ENCODE measurements at regions of chr1 and their contacts with region 1.

Region 1: DNA sequence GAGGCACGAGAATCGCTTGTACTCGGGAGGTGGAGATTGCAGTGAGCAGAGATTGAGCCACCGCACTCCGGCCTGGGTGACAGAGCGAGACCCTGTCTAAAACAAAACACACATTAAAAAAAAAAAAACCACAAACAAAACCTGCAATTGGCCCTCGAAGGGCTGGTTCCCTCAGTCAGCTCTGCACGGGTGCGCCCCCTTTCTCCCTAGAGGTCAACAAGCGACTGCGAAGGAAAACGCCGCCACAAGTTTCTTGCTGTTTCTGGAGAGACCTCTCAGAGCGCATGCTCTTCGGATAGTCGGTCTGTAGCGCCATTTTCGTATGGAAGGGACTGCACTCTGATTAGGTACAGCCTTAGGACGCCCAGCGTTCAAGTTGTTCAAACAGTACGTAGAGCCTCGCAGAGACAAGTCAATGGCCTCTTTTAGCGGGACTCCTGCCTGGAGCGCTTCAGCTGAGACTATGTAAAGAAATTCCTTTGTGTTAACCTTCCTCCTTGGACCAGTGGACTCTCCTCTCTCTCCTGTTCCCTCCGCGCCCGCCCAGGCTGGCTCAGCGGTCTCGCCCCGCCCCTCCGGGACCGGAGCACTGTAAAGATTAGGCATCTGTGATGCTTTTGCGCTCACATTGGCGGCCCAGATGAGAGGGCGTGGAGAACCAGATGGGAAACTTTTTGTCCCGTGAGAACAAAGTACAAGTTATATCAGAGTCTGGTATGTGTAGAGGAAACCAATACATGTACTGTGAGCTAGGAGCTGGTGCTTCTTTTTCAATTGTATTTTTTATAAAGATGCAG is 1.0 kb upstream of the CDC14A start:
- DNase-seq: peak; percentile 72 to 95 (median 82)
- ATAC-seq: peak; percentile 74
- H3K4me3 ChIP-seq: peak overlapping the region; percentile 96
- H3K4me3 Mint-ChIP-seq: peak overlapping the region; percentile 93
- H3K27ac ChIP-seq: peak overlapping the region; percentile 86 to 92
- H3K27ac Mint-ChIP-seq: peak overlapping the region; percentile 96
- H3K4me1 ChIP-seq: peaks cover 21% of the 10 kb centered on the region
- H3K4me1 Mint-ChIP-seq: peaks cover 36% of the 10 kb centered on the region
- H3K27me3 ChIP-seq: no peaks in the 10 kb centered on the region
- H3K27me3 Mint-ChIP-seq: no peaks in the 10 kb centered on the region
- CTCF ChIP-seq: peak; percentile 26

Region 2: DNA sequence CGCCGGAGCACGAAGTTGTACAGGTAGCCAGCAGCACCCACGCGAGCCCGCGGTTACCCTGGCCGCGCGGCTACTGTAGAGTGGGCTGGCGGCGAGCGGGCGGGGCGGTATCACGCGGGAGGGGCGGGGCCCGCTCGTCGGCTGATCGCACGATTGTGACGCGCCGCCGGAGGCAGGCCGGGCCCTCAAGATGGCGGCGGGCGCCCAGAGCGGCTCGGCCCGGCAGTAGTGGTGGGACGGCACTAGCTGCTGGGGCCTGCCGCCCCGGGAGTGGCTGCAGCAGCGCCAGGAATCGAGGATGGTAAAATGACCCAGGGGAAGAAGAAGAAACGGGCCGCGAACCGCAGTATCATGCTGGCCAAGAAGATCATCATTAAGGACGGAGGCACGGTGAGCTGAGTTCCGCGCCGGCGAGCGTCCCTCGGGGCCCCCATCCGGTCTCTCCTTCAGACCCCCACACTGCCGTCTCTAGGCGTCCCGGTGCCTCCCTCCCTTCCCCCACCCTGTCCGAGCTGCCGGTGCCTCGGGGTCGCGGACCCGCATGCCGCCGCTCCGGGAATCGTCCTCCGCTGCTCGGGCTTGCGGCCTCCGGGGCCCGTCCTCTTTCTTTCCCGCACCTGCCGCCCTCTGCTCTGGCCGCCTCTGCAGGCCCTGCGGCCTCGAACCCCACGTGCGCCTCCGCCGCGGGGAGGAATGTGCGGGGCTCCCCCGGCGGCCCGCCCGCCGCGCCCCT is 313.2 kb before region 1 on chr1:
- CTCF ChIA-PET with region 1: no interaction called
- POLR2A ChIA-PET with region 1: interaction called, 4 read pairs
- intact Hi-C with region 1: loop called in 1 of 2 experiments (anchors 5 kb)
- DNase-seq: peak; percentile 76 to 96 (median 84)
- ATAC-seq: peak; percentile 78
- H3K4me3 ChIP-seq: peak overlapping the region; percentile 91
- H3K4me3 Mint-ChIP-seq: peak overlapping the region; percentile 98
- H3K27ac ChIP-seq: peak overlapping the region; percentile 94 to 98
- H3K27ac Mint-ChIP-seq: peak overlapping the region; percentile 98
- H3K4me1 ChIP-seq: peaks cover 28% of the 10 kb centered on the region
- H3K4me1 Mint-ChIP-seq: peaks cover 58% of the 10 kb centered on the region
- H3K27me3 ChIP-seq: no peaks in the 10 kb centered on the region
- H3K27me3 Mint-ChIP-seq: no peaks in the 10 kb centered on the region
- CTCF ChIP-seq: no peak

Region 3: DNA sequence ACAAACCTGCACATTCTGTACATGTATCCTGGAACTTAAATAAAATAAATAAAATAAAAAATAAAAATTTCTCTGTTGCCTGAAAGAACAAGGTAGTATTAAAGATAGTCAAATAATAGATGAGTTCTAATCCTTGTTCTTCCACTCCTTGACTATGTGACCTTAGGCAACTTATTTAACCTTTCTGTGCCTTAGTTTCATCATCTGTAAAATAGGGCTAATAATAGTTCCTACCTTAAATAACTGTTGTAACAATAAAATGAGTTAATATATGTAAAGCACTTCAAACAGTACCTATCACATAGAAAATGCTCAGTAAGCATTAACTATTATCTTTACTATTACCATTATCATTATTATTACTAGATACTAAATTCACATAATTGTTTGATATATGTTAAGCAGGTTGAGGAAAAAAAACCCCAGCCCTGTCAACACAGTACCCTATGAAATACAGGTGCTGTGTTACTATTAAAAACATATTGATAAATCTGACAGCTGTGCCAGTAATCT is 241.7 kb before region 1 on chr1:
- CTCF ChIA-PET with region 1: no interaction called
- POLR2A ChIA-PET with region 1: no interaction called
- intact Hi-C with region 1: no loop called
- DNase-seq: no peak
- ATAC-seq: no peak
- H3K4me3 ChIP-seq: no peak overlapping the region
- H3K4me3 Mint-ChIP-seq: no peak overlapping the region
- H3K27ac ChIP-seq: no peak overlapping the region
- H3K27ac Mint-ChIP-seq: no peak overlapping the region
- H3K4me1 ChIP-seq: no peaks in the 10 kb centered on the region
- H3K4me1 Mint-ChIP-seq: no peaks in the 10 kb centered on the region
- H3K27me3 ChIP-seq: no peaks in the 10 kb centered on the region
- H3K27me3 Mint-ChIP-seq: no peaks in the 10 kb centered on the region
- CTCF ChIP-seq: no peak

Region 4: GRCh38 chr1:100265931-100266740 is 85.2 kb before region 1 on chr1 and contains the start of gene RTCA:
- CTCF ChIA-PET with region 1: interaction called, 4 read pairs
- POLR2A ChIA-PET with region 1: interaction called, 35 read pairs
- intact Hi-C with region 1: loop called (anchors 5 kb)
- DNase-seq: peak; percentile 88 to 98 (median 94)
- ATAC-seq: peak; percentile 95
- H3K4me3 ChIP-seq: peak within 1 kb of the TSS; percentile 96
- H3K4me3 Mint-ChIP-seq: peak within 1 kb of the TSS; percentile 99
- H3K27ac ChIP-seq: peak within 1 kb of the TSS; percentile 62 to 67
- H3K27ac Mint-ChIP-seq: peak within 1 kb of the TSS; percentile 93
- H3K4me1 ChIP-seq: peaks cover 41% of the 10 kb centered on the region
- H3K4me1 Mint-ChIP-seq: peaks cover 60% of the 10 kb centered on the region
- H3K27me3 ChIP-seq: no peaks in the 10 kb centered on the region
- H3K27me3 Mint-ChIP-seq: no peaks in the 10 kb centered on the region
- CTCF ChIP-seq: no peak
- total RNA-seq, gene RTCA: 62.1 to 67.1 TPM

Region 5: DNA sequence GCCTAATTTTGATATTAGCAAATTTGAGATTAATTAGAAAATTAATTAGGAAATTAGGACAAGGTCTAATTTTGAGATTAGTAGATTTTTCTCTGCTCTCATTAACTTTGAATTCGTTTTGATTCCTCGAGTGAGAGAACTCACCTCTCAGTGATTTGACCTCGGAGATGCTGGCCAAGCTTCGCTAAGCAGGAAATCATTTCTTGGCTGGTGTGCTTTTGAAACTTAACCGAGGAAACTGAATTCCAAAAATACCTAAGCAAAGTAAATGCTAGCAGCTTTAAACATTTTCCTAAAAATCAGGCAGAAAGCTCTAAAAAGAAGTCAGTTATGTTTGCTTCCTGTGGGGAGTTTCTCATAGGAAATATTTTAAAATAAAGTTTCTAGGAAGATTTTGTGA is 35.9 kb after region 1 on chr1:
- CTCF ChIA-PET with region 1: interaction called, 13 read pairs
- POLR2A ChIA-PET with region 1: interaction called, 67 read pairs
- intact Hi-C with region 1: loop called (anchors 2 to 5 kb)
- DNase-seq: peak in 2 of 14 experiments; percentile 32
- ATAC-seq: no peak
- H3K4me3 ChIP-seq: peak overlapping the region; percentile 35
- H3K4me3 Mint-ChIP-seq: peak overlapping the region; percentile 74
- H3K27ac ChIP-seq: peak overlapping the region in 1 of 2 donors; percentile 78
- H3K27ac Mint-ChIP-seq: peak overlapping the region; percentile 83
- H3K4me1 ChIP-seq: peaks cover 55% of the 10 kb centered on the region
- H3K4me1 Mint-ChIP-seq: peaks cover 94% of the 10 kb centered on the region
- H3K27me3 ChIP-seq: no peaks in the 10 kb centered on the region
- H3K27me3 Mint-ChIP-seq: no peaks in the 10 kb centered on the region
- CTCF ChIP-seq: no peak

Region 6: GRCh38 chr1:100414693-100415497 is 63.6 kb after region 1 on chr1:
- CTCF ChIA-PET with region 1: interaction called, 3 read pairs
- POLR2A ChIA-PET with region 1: interaction called, 14 read pairs
- intact Hi-C with region 1: no loop called
- DNase-seq: peak in 3 of 14 experiments; percentile 54 to 81 (median 56)
- ATAC-seq: peak; percentile 82
- H3K4me3 ChIP-seq: no peak overlapping the region
- H3K4me3 Mint-ChIP-seq: peak overlapping the region; percentile 74
- H3K27ac ChIP-seq: peak overlapping the region; percentile 3 to 59
- H3K27ac Mint-ChIP-seq: peak overlapping the region; percentile 86
- H3K4me1 ChIP-seq: peaks cover 63% of the 10 kb centered on the region
- H3K4me1 Mint-ChIP-seq: peaks cover 88% of the 10 kb centered on the region
- H3K27me3 ChIP-seq: no peaks in the 10 kb centered on the region
- H3K27me3 Mint-ChIP-seq: no peaks in the 10 kb centered on the region
- CTCF ChIP-seq: no peak

Region 7: DNA sequence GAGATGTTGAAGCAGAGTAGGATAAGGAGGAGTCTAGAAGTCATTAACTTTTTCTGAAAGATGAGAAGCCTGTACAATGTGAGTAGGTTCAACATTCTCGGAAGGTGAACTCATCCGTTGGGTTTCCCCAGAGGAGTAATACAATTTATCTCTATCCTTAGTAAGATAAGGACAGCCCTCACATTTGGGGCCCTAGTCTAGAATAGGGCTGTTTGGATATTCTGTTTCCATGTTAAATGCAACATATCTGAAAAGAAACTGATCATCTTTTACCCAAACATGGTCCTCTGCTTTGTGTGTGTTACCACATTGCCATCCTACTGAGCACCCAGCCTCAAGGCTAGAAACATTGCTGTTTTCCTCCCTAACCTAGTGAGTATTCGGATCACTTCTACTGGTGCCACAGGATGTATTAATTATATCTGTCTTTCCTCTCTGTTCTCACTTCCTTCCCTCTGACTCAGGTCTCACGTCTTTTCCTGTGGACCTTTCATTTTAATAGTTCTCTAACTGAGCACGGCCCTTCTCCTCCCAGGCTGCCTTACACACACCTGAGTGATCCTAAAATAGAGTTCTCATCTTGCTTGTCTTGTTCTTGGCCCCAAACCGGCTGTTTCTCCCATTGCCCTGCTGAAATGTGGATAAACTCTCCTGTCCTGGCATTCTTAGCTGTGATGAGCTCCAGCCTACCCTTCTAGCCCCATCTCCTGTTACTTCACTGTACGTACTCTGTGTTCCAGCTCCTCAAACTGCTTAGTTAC is 92.7 kb after region 1 on chr1:
- CTCF ChIA-PET with region 1: no interaction called
- POLR2A ChIA-PET with region 1: interaction called, 45 read pairs
- intact Hi-C with region 1: loop called (anchors 5 to 10 kb)
- DNase-seq: peak in 4 of 14 experiments; percentile 46 to 84 (median 68)
- ATAC-seq: peak; percentile 25
- H3K4me3 ChIP-seq: peak overlapping the region; percentile 16
- H3K4me3 Mint-ChIP-seq: peak overlapping the region; percentile 63
- H3K27ac ChIP-seq: peak overlapping the region; percentile 95 to 98
- H3K27ac Mint-ChIP-seq: peak overlapping the region; percentile 94
- H3K4me1 ChIP-seq: peaks cover 61% of the 10 kb centered on the region
- H3K4me1 Mint-ChIP-seq: peaks cover 93% of the 10 kb centered on the region
- H3K27me3 ChIP-seq: no peaks in the 10 kb centered on the region
- H3K27me3 Mint-ChIP-seq: no peaks in the 10 kb centered on the region
- CTCF ChIP-seq: no peak

Measured in CD4-positive, alpha-beta T cell (primary cell).